PC-9 (cell line): ENCODE measurements at regions of chr1 and their contacts with region 1.

Region 1: GRCh38 chr1:202213361-202214088 is 19.9 kb downstream of the LGR6 start:
- DNase-seq: no peak
- H3K4me3 ChIP-seq: peak overlapping the region; percentile 53; the same call in 1 of the 2 replicates
- H3K27ac ChIP-seq: no peak overlapping the region
- H3K4me1 ChIP-seq: peaks cover 4% of the 10 kb centered on the region; the same call in 1 of the 2 replicates
- H3K27me3 ChIP-seq: peaks cover 60% of the 10 kb centered on the region
- CTCF ChIP-seq: peak; percentile 63; the same call in 1 of the 2 replicates

Region 2: DNA sequence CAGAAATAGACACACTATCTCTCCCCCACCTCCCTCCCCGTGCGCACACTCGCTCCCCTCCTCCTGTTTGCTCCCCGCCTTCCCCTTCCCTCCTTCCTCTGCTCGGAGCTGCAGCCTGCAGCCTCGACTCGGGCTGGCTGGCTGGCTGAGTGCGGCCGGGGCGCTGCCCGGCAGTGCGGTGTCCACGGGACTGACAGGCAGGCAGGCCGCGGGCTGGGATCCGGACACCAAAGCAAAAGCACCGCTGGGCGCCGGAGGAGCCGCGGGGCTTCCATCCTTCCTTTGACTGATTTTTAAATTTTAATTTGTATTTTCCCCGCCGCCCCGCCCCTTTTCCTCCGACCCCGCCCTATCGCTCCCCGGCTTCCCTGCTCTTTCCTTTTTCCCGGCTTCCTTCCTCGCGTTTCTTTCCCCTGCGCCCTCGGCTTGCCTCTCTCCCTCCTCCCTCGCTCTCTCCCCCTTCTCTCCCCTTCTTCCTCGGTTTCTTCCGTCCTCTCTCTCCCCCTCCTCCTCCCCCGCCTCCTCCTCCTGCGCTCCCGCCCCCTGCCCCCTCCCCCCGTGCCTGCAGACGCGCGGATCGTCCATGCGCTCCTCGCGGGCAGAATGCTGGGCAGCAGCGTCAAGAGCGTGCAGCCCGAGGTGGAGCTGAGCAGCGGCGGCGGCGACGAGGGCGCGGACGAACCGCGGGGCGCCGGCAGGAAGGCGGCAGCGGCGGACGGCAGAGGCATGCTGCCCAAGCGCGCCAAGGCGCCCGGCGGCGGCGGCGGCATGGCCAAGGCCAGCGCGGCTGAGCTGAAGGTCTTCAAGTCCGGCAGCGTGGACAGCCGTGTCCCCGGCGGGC is 565.2 kb before region 1 on chr1:
- CTCF ChIA-PET with region 1: interaction called, 15 read pairs
- POLR2A ChIA-PET with region 1: no interaction called
- intact Hi-C with region 1: no loop called
- DNase-seq: peak; percentile 8 to 52
- H3K4me3 ChIP-seq: peak overlapping the region; percentile 55; the same call in 1 of the 2 replicates
- H3K27ac ChIP-seq: no peak overlapping the region
- H3K4me1 ChIP-seq: no peaks in the 10 kb centered on the region
- H3K27me3 ChIP-seq: peaks cover 5% of the 10 kb centered on the region; the same call in 1 of the 2 replicates
- CTCF ChIP-seq: no peak

Region 3: GRCh38 chr1:202058001-202058913 is 155.3 kb before region 1 on chr1:
- CTCF ChIA-PET with region 1: no interaction called
- POLR2A ChIA-PET with region 1: no interaction called
- intact Hi-C with region 1: no loop called
- DNase-seq: peak; percentile 79 to 98
- H3K4me3 ChIP-seq: no peak overlapping the region
- H3K27ac ChIP-seq: peak overlapping the region; percentile 98
- H3K4me1 ChIP-seq: peaks cover 78% of the 10 kb centered on the region
- H3K27me3 ChIP-seq: no peaks in the 10 kb centered on the region
- CTCF ChIP-seq: no peak

Region 4: DNA sequence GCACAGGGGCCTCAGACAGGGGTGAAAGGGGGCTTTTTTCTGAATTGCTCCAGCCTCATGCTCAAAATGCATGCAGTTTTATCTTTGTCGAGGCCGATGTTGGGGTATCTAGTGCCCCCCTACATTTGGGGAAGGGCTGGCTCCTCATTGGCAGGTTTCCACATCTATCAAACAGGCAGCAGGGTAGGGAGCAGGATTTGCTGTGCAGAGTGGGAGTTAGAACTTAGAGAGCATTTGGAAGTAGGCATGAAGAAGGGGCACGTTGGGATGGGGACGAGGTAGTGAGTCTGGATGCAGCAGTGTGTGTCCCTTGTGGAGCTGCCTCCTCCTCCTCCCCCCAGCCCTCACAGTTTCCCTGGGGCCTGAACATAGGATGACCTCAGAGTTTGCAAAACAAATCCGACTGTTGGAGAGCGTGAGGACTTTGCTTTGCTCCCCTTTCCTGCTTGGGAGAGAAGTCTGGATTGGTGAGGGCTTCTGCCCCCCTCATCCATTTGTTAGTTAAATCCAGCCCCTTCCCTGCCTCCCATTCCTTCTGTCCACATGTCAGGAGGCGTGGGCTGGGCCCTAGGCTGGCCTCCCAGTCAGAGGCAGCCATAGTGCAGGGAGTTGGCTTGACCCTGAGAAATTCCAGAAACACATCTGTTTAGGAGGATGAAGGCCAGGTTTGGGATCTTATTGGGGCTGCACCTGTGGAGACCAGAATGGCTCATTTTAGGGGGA is 127.7 kb before region 1 on chr1:
- CTCF ChIA-PET with region 1: no interaction called
- POLR2A ChIA-PET with region 1: no interaction called
- intact Hi-C with region 1: no loop called
- DNase-seq: peak; percentile 41 to 53
- H3K4me3 ChIP-seq: no peak overlapping the region
- H3K27ac ChIP-seq: peak overlapping the region; percentile 44
- H3K4me1 ChIP-seq: peaks cover 47% of the 10 kb centered on the region
- H3K27me3 ChIP-seq: no peaks in the 10 kb centered on the region
- CTCF ChIP-seq: no peak

Region 5: DNA sequence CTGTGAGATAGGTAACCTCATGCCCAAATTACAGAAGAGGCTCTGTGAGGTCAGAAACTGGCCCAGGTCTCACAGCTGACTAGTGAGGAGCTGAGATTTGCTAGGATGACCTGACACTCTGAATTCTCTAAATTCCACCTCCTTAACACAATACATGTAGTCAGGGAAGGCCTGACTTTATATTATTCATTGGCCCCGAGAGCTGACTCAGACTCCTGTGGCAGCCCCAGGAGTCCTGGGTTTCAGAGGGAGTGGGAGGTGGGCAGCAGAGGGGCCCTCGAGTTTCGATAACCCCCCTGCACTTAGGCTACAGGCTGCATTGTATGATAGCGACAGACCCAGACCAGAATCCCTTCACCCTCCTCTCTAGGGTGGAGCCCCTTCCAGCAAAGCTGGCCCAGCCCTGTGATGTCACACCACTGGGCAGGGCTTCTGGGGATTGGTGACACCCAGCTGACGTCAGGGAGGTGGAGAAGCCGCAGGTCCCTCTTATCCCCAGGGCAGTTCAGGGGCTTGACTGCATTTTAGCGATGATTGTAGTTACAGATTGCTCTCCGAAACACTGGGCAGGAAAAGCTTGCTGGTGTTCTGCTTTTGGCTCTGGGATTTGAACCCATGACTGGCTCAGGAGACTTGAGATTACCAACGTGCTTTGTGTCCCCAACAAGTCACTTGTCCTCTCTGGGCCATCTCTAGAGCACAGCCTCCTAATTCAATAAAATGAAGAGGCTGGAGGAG is 107.8 kb before region 1 on chr1:
- CTCF ChIA-PET with region 1: no interaction called
- POLR2A ChIA-PET with region 1: no interaction called
- intact Hi-C with region 1: no loop called
- DNase-seq: peak; percentile 91 to 95
- H3K4me3 ChIP-seq: peak overlapping the region; percentile 26; the same call in 1 of the 2 replicates
- H3K27ac ChIP-seq: peak overlapping the region; percentile 99
- H3K4me1 ChIP-seq: peaks cover 76% of the 10 kb centered on the region
- H3K27me3 ChIP-seq: no peaks in the 10 kb centered on the region
- CTCF ChIP-seq: no peak

Region 6: GRCh38 chr1:202170726-202171125 is 42.8 kb before region 1 on chr1:
- CTCF ChIA-PET with region 1: no interaction called
- POLR2A ChIA-PET with region 1: no interaction called
- intact Hi-C with region 1: no loop called
- DNase-seq: no peak
- H3K4me3 ChIP-seq: no peak overlapping the region
- H3K27ac ChIP-seq: no peak overlapping the region
- H3K4me1 ChIP-seq: no peaks in the 10 kb centered on the region
- H3K27me3 ChIP-seq: peaks cover 7% of the 10 kb centered on the region; the same call in 1 of the 2 replicates
- CTCF ChIP-seq: no peak

Region 7: DNA sequence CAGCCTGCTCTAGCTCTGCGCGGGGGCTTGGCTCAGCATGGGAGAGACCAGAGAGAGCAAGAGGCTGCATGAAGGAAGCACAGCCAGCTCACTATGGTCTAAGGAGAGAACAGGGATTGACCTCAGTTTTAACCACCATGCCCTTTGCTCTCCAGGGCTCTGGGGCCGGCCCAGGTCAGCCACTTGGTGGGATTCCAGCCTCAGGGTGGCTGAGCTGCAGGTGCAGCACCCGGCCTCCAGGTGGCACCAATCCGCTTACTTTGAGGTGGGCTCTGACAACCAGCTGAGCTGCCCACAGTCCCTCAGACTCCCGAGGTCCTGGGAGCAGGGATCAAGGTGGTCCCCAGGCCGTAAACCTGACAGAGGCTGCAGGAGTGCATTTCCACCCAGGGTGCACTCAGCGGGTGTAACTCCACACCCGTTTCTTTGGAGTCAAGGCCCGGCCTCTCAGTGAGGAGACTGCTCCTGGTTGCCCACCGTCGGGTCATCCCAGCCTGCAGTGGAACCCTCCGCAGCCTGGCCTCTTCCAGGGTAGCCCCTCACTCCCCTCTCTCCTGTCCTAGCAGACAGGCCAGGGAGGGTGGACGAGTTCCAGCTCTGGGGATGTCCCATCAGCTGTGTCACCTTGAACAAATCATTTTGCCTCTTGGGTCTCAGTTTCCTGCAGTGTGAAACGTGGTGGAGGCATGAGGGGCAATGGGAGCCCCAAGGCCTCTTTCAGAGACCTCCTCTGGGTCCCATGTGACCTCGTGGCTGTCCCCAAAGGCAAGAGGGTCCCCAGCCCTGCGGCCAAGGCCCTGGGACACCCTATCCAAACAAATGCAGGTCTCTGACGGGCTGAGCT is 20.5 kb before region 1 on chr1:
- CTCF ChIA-PET with region 1: interaction called, 10 read pairs
- POLR2A ChIA-PET with region 1: no interaction called
- intact Hi-C with region 1: no loop called
- DNase-seq: peak; percentile 41 to 71
- H3K4me3 ChIP-seq: no peak overlapping the region
- H3K27ac ChIP-seq: no peak overlapping the region
- H3K4me1 ChIP-seq: peaks cover 5% of the 10 kb centered on the region
- H3K27me3 ChIP-seq: peaks cover 7% of the 10 kb centered on the region; the same call in 1 of the 2 replicates
- CTCF ChIP-seq: peak; percentile 92